HCT116 (cell line): ENCODE measurements at regions of chr1 and their contacts with region 1.

Region 1: DNA sequence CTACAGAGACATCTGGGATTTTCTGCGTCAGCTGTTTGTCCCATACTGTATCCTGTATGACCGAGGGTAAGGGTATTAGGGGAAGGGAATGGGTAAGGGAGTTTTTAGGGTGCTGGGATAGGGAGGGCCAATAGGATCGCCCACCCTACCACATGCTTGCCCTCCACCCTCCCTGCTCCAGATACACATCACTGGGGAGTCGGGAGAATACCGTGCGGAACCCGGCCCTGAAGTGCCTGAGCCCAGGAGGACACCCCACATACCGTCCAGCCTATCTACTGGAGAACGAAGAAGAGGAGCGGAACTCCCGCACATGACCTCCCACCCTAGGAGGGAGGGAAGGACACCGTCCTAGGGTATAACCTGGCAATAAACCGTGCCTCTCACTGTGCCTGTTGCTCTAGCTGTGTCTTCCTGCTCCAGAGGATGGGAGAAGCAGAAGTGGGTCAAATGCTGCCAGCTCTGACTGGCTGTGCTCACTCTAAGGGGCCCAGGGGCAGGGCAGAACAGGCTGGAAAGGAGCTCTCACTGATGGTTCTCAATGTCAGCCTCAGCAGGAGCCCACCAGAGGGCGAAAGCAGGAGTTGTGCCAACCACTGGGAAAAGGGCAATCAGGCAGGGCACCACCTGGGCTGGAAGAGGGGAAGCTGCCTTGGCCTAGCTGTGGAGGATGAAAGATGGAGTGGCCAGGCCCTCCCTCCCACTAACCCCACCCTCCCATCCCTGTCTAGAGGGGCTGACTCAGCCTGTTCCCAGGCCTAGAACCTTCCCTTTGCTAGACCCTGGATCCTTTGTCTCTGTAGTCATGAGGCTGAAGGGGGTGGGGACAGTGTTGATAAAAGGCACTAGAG is 440 bp upstream of the LENEP start:
- DNase-seq: no peak
- ATAC-seq: peak; percentile 65
- H3K4me3 ChIP-seq: no peak overlapping the region
- H3K27ac ChIP-seq: peak overlapping the region; percentile 29; the same call in 1 of the 2 replicates
- H3K4me1 ChIP-seq: peaks cover 20 to 43% of the 10 kb centered on the region in 2 experiments
- H3K27me3 ChIP-seq: no peaks in the 10 kb centered on the region
- CTCF ChIP-seq: peak in 2 of 3 experiments; percentile 34 to 40; a peak in 3 of 6 replicates
- POLR2A ChIP-seq: no peak
- RAD21 ChIP-seq: no peak

Region 2: GRCh38 chr1:155017041-155017945 is 24.3 kb after region 1 on chr1:
- CTCF ChIA-PET with region 1: interaction called, 10 read pairs
- POLR2A ChIA-PET with region 1: no interaction called
- RAD21 ChIA-PET with region 1: no interaction called
- intact Hi-C with region 1: no loop called
- DNase-seq: peak; percentile 87
- ATAC-seq: peak; percentile 86
- H3K4me3 ChIP-seq: peak overlapping the region; percentile 27 to 47
- H3K27ac ChIP-seq: peak overlapping the region; percentile 89
- H3K4me1 ChIP-seq: peaks cover 30 to 62% of the 10 kb centered on the region in 2 experiments
- H3K27me3 ChIP-seq: no peaks in the 10 kb centered on the region
- CTCF ChIP-seq: peak; percentile 99 to 100 (median 100)
- POLR2A ChIP-seq: no peak
- RAD21 ChIP-seq: peak; percentile 86

Region 3: DNA sequence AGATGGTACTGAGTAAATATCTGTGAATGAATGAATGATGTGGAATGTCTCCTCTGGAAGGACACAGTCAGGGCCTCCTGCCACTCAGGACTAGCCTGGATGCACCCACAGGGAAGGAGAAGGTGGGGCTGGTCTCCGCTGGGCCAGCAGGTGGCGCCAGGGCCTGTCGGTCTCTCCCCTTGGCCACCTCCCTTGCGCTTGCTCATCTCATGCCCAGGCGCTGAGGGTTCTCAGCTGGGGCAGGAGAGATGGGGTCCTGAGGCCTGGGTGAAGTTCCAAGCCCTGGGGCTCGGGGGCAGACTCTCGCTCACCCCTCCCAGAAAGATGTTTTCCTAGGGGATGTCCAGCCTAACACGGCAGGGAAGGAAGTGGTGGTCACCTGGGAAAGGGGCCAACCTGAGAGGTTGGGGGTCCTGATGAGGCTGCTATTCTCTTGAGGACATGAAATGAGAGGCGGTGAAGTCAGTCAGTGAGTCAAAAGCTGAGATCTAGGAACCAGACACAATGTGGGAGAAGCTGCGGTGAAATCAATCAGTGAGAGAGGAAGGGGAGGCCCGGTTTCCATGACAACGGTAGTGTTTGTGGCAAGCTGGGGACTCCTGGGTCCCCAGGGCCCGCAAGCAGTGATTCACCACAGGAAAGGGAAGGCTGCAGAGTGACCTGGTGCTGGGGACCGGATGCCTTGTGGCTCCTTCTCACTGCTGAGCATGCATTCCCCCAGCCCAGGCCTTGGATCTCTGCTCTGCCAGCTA is 1103.9 kb after region 1 on chr1:
- CTCF ChIA-PET with region 1: no interaction called
- POLR2A ChIA-PET with region 1: no interaction called
- RAD21 ChIA-PET with region 1: no interaction called
- intact Hi-C with region 1: no loop called
- DNase-seq: peak; percentile 54
- ATAC-seq: peak; percentile 96
- H3K4me3 ChIP-seq: no peak overlapping the region
- H3K27ac ChIP-seq: peak overlapping the region; percentile 30
- H3K4me1 ChIP-seq: peaks cover 33 to 66% of the 10 kb centered on the region in 2 experiments
- H3K27me3 ChIP-seq: no peaks in the 10 kb centered on the region
- CTCF ChIP-seq: peak in 2 of 3 experiments; percentile 98 to 99; a peak in 4 of 6 replicates
- POLR2A ChIP-seq: no peak
- RAD21 ChIP-seq: no peak